Aorta (tissue), 5 donors: ENCODE measurements at regions of chr19 and their contacts with region 1.

Region 1: DNA sequence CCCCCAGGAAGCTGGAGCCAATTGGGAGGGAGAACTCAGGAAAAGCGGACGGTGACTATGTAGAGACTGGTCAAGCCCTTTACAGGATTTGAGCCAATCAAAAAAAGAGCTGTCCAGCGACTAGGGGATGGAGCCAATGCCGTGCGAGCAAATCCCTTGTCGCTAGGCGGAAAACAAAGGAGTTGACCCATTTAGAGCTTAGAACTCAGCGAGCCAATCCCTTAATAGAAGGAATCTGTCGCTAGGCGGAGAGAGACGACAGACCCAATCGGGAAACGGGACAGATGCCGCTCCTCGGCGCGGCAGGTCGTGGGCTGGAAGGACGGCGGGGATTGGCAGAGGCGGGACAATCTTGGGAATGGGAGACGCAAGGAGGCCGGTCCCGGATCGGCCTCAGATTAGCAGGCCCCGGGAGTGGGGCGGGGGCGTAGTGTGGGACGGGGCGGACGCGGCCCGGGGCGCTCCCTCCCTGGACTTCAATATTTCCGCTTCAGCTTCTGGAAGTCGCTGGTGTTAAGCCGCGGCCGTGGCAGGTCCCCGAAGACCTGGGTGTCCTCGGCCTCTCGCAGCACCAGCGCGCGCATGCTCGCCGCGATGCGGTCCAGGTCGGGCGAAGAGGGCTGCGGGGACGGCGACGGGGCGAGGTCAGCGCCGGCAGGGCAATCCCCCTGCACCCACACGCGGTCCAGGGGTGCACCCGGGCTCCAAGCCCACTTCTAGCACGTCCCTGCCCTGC is 2.2 kb upstream of the PNKP start:
- DNase-seq: peak; percentile 97 to 98
- ATAC-seq: peak; percentile 88
- H3K4me3 ChIP-seq: peak overlapping the region; percentile 11 to 30
- H3K27ac ChIP-seq: peak overlapping the region in 1 of 2 donors; percentile 30
- H3K4me1 ChIP-seq: no peaks in the 10 kb centered on the region
- H3K27me3 ChIP-seq: no peaks in the 10 kb centered on the region

Region 2: GRCh38 chr19:49766007-49766937 is 103.3 kb before region 1 on chr19:
- intact Hi-C with region 1: loop called (anchors 5 to 10 kb)
- DNase-seq: peak; percentile 99 to 100
- ATAC-seq: peak; percentile 96
- H3K4me3 ChIP-seq: peak overlapping the region; percentile 19 to 98
- H3K27ac ChIP-seq: peak overlapping the region; percentile 72 to 85
- H3K4me1 ChIP-seq: peaks cover 0 to 4% of the 10 kb centered on the region in 2 donors
- H3K27me3 ChIP-seq: no peaks in the 10 kb centered on the region

Region 3: GRCh38 chr19:49786376-49786820 is 83.2 kb before region 1 on chr19:
- intact Hi-C with region 1: no loop called
- DNase-seq: no peak
- ATAC-seq: no peak
- H3K4me3 ChIP-seq: no peak overlapping the region
- H3K27ac ChIP-seq: no peak overlapping the region
- H3K4me1 ChIP-seq: no peaks in the 10 kb centered on the region
- H3K27me3 ChIP-seq: no peaks in the 10 kb centered on the region

Region 4: GRCh38 chr19:49817964-49818648 is 51.5 kb before region 1 on chr19 and contains the start of gene MED25:
- intact Hi-C with region 1: loop called in 1 of 2 experiments (anchors 5 kb)
- DNase-seq: peak; percentile 93 to 96
- ATAC-seq: peak; percentile 93
- H3K4me3 ChIP-seq: peak within 1 kb of the TSS; percentile 1 to 76
- H3K27ac ChIP-seq: peak within 1 kb of the TSS in 1 of 2 donors; percentile 8
- H3K4me1 ChIP-seq: no peaks in the 10 kb centered on the region
- H3K27me3 ChIP-seq: no peaks in the 10 kb centered on the region
- total RNA-seq, gene MED25: 27.2 to 40.3 TPM

Region 5: GRCh38 chr19:49850473-49851342 is 18.9 kb before region 1 on chr19 and contains the start of gene PTOV1:
- intact Hi-C with region 1: loop called in 1 of 2 experiments (anchors 2 kb)
- DNase-seq: peak; percentile 94 to 97
- ATAC-seq: peak; percentile 96
- H3K4me3 ChIP-seq: peak within 1 kb of the TSS; percentile 93 to 97
- H3K27ac ChIP-seq: peak within 1 kb of the TSS; percentile 84 to 99
- H3K4me1 ChIP-seq: no peaks in the 10 kb centered on the region
- H3K27me3 ChIP-seq: no peaks in the 10 kb centered on the region
- total RNA-seq, gene PTOV1: 103 to 133 TPM

Region 6: DNA sequence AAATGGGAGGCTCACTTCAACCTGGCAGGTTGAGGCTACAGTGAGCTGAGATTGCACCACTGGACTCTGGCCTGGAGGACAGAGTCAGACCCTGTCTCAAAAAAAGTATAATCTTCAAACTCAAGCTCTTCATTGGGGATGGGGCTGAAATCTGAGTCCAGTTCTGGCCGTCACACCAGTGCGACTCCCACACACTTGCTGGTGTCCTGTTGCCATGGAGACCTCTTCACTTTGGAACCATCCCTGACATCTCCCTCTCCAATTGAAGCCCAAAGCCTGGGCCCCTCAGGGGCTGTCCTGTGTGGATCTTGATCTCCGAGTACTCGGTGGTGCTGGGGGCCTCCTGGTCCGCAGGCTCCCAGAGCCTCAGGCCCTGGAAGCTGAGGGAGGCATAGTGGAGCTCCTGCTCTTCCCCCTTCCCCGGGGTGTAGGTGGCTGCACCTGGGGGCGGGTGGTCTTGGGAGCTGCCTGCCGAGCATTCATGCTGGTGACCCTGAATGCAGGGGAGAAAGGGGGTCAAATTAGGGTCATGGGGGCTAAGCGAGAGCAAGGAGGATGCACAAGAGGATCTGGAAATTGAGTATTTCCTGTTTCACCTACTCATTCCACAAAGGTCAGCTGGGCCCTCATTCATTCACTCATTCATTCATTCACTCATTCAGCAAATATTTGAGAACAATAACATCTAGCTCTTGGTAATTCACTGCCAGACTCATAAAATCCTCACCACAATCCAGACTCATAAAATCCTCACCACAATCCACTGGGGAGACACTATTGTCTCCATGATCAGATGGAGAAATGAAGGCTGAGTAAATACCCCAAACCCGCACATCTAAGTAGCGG is 80.4 kb after region 1 on chr19:
- intact Hi-C with region 1: no loop called
- DNase-seq: peak; percentile 24 to 33
- ATAC-seq: no peak
- H3K4me3 ChIP-seq: no peak overlapping the region
- H3K27ac ChIP-seq: no peak overlapping the region
- H3K4me1 ChIP-seq: peaks cover 2 to 4% of the 10 kb centered on the region in 2 donors
- H3K27me3 ChIP-seq: no peaks in the 10 kb centered on the region